ENCODE measurements at regions of chr9 and their contacts with region 1.

Region 1: GRCh38 chr9:18824095-18824666 is 208.8 kb downstream of the SAXO1 start:
- DNase-seq: peak; percentile 66
- ATAC-seq: peak; percentile 52; the same call in 1 of the 2 replicates
- H3K4me3 ChIP-seq: no peak overlapping the region
- H3K27ac ChIP-seq: no peak overlapping the region
- H3K4me1 ChIP-seq: peaks cover 21% of the 10 kb centered on the region
- H3K27me3 ChIP-seq: no peaks in the 10 kb centered on the region
- CTCF ChIP-seq: peak; percentile 71

Region 2: GRCh38 chr9:18149471-18150011 is 674.6 kb before region 1 on chr9:
- CTCF ChIA-PET with region 1: no interaction called
- POLR2A ChIA-PET with region 1: no interaction called
- intact Hi-C with region 1: loop called (anchors 2 kb)
- DNase-seq: peak; percentile 21
- ATAC-seq: peak; percentile 45
- H3K4me3 ChIP-seq: no peak overlapping the region
- H3K27ac ChIP-seq: no peak overlapping the region
- H3K4me1 ChIP-seq: no peaks in the 10 kb centered on the region
- H3K27me3 ChIP-seq: peaks cover 13% of the 10 kb centered on the region
- CTCF ChIP-seq: peak; percentile 43; the same call in 1 of the 2 replicates

Region 3: DNA sequence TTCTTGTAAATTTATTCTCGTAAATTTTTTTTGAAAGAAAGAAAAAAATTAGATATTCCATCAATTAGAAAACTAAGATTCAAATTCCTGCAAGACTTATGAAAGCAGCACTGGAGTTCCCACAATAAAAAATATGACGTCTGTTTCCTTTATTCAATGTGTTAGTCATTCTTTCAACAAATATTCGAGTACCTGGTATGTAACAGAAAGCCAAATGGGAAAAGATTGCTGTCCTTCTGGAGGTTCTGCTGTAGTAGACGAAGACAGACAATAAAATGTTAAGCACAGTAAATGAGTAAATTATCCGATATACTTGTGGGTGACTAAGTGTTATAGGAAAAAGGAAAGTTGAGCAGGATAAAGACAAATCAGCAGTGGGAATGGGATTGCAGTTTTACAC is 258.1 kb before region 1 on chr9:
- CTCF ChIA-PET with region 1: interaction called, 4 read pairs
- POLR2A ChIA-PET with region 1: no interaction called
- intact Hi-C with region 1: loop called (anchors 5 kb)
- DNase-seq: peak; percentile 83
- ATAC-seq: peak; percentile 97
- H3K4me3 ChIP-seq: no peak overlapping the region
- H3K27ac ChIP-seq: peak overlapping the region; percentile 99
- H3K4me1 ChIP-seq: peaks cover 44% of the 10 kb centered on the region
- H3K27me3 ChIP-seq: no peaks in the 10 kb centered on the region
- CTCF ChIP-seq: no peak

Region 4: DNA sequence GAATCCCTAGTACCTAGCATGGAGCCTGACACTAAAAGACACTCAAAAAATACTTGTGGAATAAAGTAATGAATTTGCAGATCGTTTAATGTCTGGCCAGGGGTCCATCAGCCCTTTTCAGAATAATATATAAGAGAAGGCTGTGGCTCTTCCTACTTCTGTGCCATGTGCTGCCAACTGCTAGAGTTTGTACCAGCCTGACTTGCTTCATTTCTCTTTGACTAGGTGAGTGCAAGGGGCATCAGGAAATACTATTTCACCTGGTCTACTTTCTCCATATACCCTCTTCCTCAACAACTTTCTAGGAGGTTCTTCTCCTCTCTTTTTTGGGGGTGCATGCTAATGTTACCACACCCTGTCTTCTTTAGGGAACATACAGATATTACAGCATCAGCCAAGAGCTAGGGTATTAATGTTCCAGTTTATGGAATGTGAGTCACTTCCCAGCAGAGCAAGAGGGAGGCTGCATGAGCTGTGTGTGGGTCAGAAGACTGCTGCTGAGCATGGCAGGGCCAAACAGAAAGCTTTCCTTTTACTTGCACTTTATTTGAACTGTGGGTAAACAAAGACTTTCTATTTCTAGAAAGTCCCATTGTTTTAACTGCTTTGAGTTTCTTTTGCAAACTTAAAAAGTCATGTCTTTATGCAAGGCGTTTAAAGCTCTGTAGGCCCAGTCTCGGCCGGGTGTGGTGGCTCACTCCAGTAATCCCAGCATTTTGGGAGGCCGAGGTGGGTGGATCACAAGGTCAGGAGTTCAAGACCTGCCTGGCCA is 191.4 kb before region 1 on chr9:
- CTCF ChIA-PET with region 1: interaction called, 4 read pairs
- POLR2A ChIA-PET with region 1: no interaction called
- intact Hi-C with region 1: loop called (anchors 5 kb)
- DNase-seq: peak; percentile 82
- ATAC-seq: peak; percentile 100
- H3K4me3 ChIP-seq: no peak overlapping the region
- H3K27ac ChIP-seq: peak overlapping the region; percentile 90
- H3K4me1 ChIP-seq: peaks cover 18% of the 10 kb centered on the region
- H3K27me3 ChIP-seq: no peaks in the 10 kb centered on the region
- CTCF ChIP-seq: no peak

Region 5: DNA sequence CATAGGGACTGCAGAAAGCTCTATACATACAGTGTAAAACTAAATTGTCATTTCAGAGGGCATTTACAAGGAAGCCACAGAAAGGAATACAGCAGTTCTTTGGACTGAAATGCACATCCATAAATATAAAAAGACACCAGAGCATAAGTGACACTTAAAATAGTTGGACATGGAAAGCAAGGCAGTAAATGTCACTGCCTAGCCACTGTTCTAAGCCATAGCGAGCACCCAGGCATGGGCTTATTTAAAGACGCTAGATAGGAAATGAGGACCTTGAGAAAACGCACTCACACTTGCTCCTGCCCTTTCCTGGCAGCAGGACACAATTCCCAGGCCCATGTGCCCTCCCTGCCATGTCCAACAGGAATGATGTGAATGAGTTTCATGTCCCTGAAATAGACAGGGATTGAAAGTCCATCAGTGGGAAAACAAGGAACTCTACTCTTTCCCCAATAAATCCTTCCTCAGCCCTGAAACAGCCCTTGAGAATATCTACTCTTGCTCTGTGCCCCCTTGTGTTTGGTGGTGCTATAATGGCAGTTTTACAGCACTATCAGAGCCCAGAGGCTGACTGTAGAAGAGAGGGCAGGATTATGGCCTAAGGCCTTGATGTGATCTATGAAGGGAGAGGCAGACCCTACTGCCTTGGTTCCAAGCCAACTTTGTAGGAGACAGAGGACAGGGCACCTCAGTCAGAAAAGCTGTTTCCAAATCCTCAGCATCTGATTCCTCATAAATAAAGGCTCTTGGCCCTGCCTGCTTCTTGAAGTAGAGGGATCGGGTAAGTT is 25.9 kb after region 1 on chr9:
- CTCF ChIA-PET with region 1: no interaction called
- POLR2A ChIA-PET with region 1: no interaction called
- intact Hi-C with region 1: no loop called
- DNase-seq: no peak
- ATAC-seq: no peak
- H3K4me3 ChIP-seq: no peak overlapping the region
- H3K27ac ChIP-seq: no peak overlapping the region
- H3K4me1 ChIP-seq: no peaks in the 10 kb centered on the region
- H3K27me3 ChIP-seq: no peaks in the 10 kb centered on the region
- CTCF ChIP-seq: no peak

Region 6: DNA sequence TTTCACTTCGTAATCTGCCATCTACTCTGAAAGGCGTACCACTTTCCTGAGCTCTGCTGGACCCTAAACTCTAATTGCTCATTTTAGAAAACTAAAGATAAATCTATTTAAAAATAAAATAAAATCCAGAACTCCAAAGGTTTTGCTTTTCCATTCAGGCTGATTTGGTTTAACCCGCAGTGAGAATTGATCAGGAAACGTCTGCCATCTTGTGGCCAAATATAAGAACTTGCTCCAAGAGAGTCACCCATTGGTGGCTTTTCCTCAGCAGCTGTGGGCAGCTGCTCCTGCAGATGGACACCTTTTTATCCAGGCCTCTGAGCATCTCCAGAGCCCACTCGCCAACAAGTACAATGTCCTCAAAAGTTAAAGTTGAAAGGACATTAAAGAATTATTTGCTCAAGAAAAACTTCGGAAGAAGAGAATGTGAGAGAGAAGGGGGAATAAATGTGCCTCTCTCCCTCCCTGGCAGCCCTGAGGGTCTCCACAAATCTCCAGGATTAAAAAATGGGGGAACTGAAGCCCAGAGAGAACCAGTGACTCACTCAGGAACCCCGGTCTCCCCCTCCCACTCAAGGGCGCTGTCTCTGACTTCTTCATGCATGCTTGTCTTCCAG is 204.8 kb after region 1 on chr9:
- CTCF ChIA-PET with region 1: no interaction called
- POLR2A ChIA-PET with region 1: no interaction called
- intact Hi-C with region 1: loop called (anchors 10 kb)
- DNase-seq: peak; percentile 69
- ATAC-seq: peak; percentile 71
- H3K4me3 ChIP-seq: no peak overlapping the region
- H3K27ac ChIP-seq: no peak overlapping the region
- H3K4me1 ChIP-seq: no peaks in the 10 kb centered on the region
- H3K27me3 ChIP-seq: no peaks in the 10 kb centered on the region
- CTCF ChIP-seq: peak; percentile 70

Measured in PC-3 (cell line).